ENCODE measurements at regions of chr17 and their contacts with region 1.

Region 1: GRCh38 chr17:41811549-41812380 is at the start of gene P3H4:
- DNase-seq: peak; percentile 74 to 87 (median 77)
- ATAC-seq: peak; percentile 28 to 87 (median 80)
- H3K4me3 ChIP-seq: peak within 1 kb of the TSS; percentile 62 to 93 (median 67)
- H3K27ac ChIP-seq: peak within 1 kb of the TSS in 11 of 12 donors; percentile 42 to 84 (median 68)
- H3K4me1 ChIP-seq: peaks cover 0 to 36% (median 18%) of the 10 kb centered on the region in 12 donors
- H3K27me3 ChIP-seq: peaks cover 0 to 9% (median 0%) of the 10 kb centered on the region in 9 donors
- CTCF ChIP-seq: peak; percentile 42 to 89 (median 72)
- POLR2A ChIP-seq: peak in 1 of 2 donors; percentile 53
- total RNA-seq, gene P3H4: 2.2 to 10.1 (median 5.3) TPM

Region 2: GRCh38 chr17:41835800-41836549 is 24.2 kb after region 1 on chr17 and contains the start of gene NT5C3B:
- intact Hi-C with region 1: loop called in 1 of 10 experiments (anchors 2 kb)
- DNase-seq: peak; percentile 54 to 83 (median 68)
- ATAC-seq: peak; percentile 68 to 96 (median 92)
- H3K4me3 ChIP-seq: peak within 1 kb of the TSS; percentile 73 to 97 (median 88)
- H3K27ac ChIP-seq: peak within 1 kb of the TSS in 11 of 12 donors; percentile 6 to 88 (median 64)
- H3K4me1 ChIP-seq: peaks cover 0 to 17% (median 12%) of the 10 kb centered on the region in 12 donors
- H3K27me3 ChIP-seq: no peaks in the 10 kb centered on the region
- CTCF ChIP-seq: no peak
- POLR2A ChIP-seq: no peak
- total RNA-seq, gene NT5C3B: 16.0 to 26.7 (median 24.1) TPM

Region 3: GRCh38 chr17:41885733-41886132 is 74.0 kb after region 1 on chr17:
- intact Hi-C with region 1: loop called in 1 of 10 experiments (anchors 10 kb)
- DNase-seq: no peak
- ATAC-seq: no peak
- H3K4me3 ChIP-seq: no peak overlapping the region
- H3K27ac ChIP-seq: no peak overlapping the region
- H3K4me1 ChIP-seq: no peaks in the 10 kb centered on the region
- H3K27me3 ChIP-seq: no peaks in the 10 kb centered on the region
- CTCF ChIP-seq: peak in 5 of 12 donors; percentile 3 to 31 (median 14)
- POLR2A ChIP-seq: no peak